BJ (cell line): ENCODE measurements at regions of chr7 and their contacts with region 1.

Region 1: GRCh38 chr7:27910326-27910725 is 170.4 kb downstream of the TAX1BP1 start:
- DNase-seq: no peak
- H3K4me3 ChIP-seq: no peak overlapping the region
- H3K27me3 ChIP-seq: no peaks in the 10 kb centered on the region
- CTCF ChIP-seq: no peak

Region 2: DNA sequence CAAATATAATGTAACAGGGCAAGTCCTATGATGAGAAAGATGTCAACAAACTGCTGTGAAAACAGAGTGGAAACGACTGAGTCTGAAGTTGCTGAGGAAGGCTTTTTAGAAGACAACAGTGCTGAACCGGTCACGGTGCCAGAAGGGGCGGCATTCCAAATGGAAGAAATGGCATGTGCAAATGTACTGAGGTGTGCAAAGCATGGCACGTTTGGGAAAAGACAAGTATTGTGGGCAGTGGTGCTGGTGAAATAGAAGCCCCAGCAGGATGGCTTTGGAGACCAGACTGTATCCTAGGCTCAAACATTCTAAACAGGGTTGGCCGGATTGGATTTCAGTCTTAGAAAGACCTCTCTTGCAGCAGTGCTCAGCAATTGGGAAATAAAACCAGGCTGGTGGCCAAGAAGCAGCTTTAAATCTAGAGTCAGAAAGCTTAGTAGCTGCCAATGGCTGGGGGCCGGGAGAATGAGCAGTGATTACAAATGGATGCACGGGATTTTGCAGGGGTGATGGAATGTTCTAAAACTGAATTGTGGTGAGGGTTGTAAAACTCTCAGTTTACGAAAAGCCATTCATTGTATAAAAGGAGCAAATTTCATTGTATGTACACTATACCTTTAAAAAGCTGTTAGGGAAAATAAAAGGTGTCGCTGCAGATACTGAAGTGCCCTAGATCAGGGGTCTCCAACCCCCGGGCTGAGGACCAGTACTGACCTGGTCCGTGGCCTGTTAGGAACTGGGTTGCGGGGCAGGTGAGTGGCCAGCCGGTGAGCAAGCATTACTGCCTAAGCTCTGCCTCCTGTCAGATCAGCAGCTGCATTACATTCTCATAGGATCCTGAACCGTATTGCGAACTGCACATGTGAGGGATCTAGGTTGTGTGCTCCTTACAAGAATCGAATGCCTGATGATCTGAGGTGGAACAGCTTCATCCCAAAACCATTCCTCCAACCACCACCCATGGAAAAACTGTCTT is 389.2 kb before region 1 on chr7:
- CTCF ChIA-PET with region 1: no interaction called
- POLR2A ChIA-PET with region 1: no interaction called
- DNase-seq: no peak
- H3K4me3 ChIP-seq: no peak overlapping the region
- H3K27me3 ChIP-seq: no peaks in the 10 kb centered on the region
- CTCF ChIP-seq: no peak

Region 3: DNA sequence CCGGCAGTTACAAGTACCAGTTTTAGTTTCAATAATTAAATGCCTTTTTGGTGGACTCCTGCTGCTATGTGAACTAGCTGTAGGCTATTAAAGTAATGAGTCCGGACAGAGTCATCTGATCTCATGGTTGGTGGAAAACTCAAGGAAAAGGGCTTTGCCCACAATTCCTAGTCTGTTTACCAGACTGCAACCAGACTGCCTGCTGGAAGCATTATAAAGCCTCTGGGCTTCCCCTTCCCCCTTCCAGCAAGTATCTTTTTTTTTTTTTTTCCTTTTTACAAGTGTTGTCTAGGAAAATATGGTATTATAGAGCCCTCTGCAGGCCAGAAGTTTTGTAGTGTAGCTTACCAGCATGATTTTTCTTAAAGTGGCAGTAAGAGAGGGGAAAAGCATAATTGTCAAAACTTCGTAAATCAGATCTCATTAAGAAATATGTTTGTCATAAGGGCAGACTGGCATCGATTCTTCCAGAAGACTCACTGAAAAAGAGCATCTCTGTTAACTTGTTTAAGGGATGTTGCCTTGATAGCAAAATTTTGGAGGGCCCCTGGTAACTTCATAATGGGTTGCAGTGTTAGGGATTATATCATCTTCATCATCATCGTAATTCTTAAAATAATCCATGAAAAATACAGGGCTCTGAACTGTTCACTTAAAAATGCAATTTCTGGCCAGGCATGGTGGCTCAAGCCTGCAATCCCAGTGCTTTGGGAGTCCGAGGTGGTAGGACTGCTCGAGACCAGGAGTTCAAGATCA is 10.9 kb after region 1 on chr7:
- CTCF ChIA-PET with region 1: interaction called, 15 read pairs
- POLR2A ChIA-PET with region 1: no interaction called
- DNase-seq: peak; percentile 94
- H3K4me3 ChIP-seq: no peak overlapping the region
- H3K27me3 ChIP-seq: no peaks in the 10 kb centered on the region
- CTCF ChIP-seq: peak; percentile 55